Esophagus squamous epithelium (tissue), 5 donors: ENCODE measurements at regions of chr2 and their contacts with region 1.

Region 1: DNA sequence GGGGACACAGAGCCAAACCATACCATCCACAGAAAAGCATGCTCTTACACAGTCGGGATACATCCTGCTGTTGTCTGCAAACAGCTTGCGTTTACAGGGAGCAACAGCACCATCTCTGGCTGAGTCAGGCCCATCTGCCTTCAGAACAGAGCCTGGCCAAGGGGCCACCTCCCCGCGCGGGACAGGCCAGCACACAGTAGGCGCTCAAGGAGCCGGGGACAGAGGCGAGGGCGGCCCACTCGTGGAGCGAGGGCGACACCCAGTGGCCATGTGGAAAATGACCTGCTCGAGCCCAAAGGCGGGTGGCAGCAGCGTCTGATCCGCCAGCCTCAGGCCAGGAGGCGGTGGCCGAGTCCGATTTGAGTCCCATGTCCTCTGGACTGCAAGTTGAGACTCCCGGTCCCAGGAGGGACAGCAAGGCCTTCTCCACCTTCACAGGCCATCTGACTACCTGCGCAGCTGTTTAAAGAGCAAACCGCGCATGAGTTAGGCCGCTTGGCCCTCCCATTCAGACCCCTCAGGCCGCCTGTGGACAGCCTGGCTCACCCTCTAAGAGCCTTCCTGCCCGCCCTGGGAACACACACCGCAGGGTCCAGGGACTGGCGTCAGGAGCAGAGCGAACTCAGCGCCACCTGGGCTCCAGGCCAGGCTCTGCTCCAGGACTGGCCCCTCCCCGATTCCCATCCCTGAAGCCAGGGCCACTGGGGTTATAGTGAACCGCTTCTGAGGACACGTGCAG is 38.3 kb downstream of the TTC32 start:
- DNase-seq: no peak
- H3K4me3 ChIP-seq: peak overlapping the region in 3 of 4 donors; percentile 5 to 45 (median 6)
- H3K27ac ChIP-seq: no peak overlapping the region
- H3K4me1 ChIP-seq: peaks cover 4 to 42% (median 13%) of the 10 kb centered on the region in 3 donors
- H3K27me3 ChIP-seq: peaks cover 0 to 2% (median 0%) of the 10 kb centered on the region in 4 donors
- CTCF ChIP-seq: peak; percentile 85 to 96 (median 90)
- POLR2A ChIP-seq: no peak

Region 2: GRCh38 chr2:18520451-18521425 is 1342.7 kb before region 1 on chr2:
- intact Hi-C with region 1: loop called (anchors 5 kb)
- DNase-seq: no peak
- H3K4me3 ChIP-seq: no peak overlapping the region
- H3K27ac ChIP-seq: peak overlapping the region in 3 of 4 donors; percentile 45 to 68 (median 65)
- H3K4me1 ChIP-seq: peaks cover 0 to 24% (median 0%) of the 10 kb centered on the region in 3 donors
- H3K27me3 ChIP-seq: peaks cover 0 to 13% (median 0%) of the 10 kb centered on the region in 4 donors
- CTCF ChIP-seq: peak; percentile 60 to 91 (median 86)
- POLR2A ChIP-seq: no peak

Region 3: DNA sequence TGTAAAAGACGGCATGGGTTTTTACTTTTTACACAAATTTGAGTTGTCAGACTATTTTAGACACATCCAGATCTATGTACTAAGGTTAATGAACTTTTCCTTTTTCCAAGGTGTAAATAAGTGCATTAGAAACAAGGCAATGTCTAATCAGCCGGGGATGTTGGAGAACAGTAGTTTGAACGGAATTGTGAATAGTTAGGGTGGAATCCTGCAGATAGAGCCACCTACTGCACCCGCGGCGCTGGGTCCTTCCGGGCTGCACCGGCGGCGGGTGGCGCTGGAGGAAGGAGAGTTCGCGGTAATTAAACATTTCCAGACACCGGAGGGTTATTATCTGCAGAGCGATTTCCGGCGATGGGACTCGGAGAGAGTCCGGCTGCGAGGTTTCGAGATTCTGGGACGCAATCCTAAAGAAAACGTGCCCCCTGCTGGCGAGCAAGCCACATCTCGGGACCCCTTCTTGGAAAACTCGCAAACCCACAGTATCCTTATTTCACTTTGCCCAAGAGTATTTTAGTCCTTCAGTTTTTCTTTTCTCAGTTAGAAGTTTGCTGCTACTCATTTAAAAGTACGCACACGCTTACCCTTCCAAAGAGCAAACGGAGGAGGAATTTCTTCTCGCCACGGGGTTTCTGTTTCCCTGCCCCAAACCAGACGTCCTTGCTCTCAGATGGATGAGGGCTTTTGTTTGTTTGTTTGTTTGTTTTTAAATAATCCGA is 500.6 kb before region 1 on chr2:
- intact Hi-C with region 1: loop called (anchors 10 kb)
- DNase-seq: no peak
- H3K4me3 ChIP-seq: peak overlapping the region; percentile 37 to 67 (median 62)
- H3K27ac ChIP-seq: peak overlapping the region; percentile 14 to 70 (median 50)
- H3K4me1 ChIP-seq: peaks cover 3 to 41% (median 4%) of the 10 kb centered on the region in 3 donors
- H3K27me3 ChIP-seq: peaks cover 0 to 56% (median 0%) of the 10 kb centered on the region in 4 donors
- CTCF ChIP-seq: peak; percentile 62 to 84 (median 78)
- POLR2A ChIP-seq: no peak

Region 4: GRCh38 chr2:19911799-19912509 is 48.5 kb after region 1 on chr2:
- intact Hi-C with region 1: no loop called
- DNase-seq: no peak
- H3K4me3 ChIP-seq: no peak overlapping the region
- H3K27ac ChIP-seq: no peak overlapping the region
- H3K4me1 ChIP-seq: no peaks in the 10 kb centered on the region
- H3K27me3 ChIP-seq: no peaks in the 10 kb centered on the region
- CTCF ChIP-seq: no peak
- POLR2A ChIP-seq: no peak